ENCODE measurements at regions of chr6 and their contacts with region 1.

Region 1: GRCh38 chr6:133512410-133513016 is 271.4 kb downstream of the EYA4 start:
- DNase-seq: peak; percentile 21
- ATAC-seq: no peak
- H3K4me3 ChIP-seq: no peak overlapping the region
- H3K27ac ChIP-seq: no peak overlapping the region
- H3K4me1 ChIP-seq: no peaks in the 10 kb centered on the region
- H3K27me3 ChIP-seq: no peaks in the 10 kb centered on the region
- CTCF ChIP-seq: peak; percentile 20 to 71 (median 58)

Region 2: DNA sequence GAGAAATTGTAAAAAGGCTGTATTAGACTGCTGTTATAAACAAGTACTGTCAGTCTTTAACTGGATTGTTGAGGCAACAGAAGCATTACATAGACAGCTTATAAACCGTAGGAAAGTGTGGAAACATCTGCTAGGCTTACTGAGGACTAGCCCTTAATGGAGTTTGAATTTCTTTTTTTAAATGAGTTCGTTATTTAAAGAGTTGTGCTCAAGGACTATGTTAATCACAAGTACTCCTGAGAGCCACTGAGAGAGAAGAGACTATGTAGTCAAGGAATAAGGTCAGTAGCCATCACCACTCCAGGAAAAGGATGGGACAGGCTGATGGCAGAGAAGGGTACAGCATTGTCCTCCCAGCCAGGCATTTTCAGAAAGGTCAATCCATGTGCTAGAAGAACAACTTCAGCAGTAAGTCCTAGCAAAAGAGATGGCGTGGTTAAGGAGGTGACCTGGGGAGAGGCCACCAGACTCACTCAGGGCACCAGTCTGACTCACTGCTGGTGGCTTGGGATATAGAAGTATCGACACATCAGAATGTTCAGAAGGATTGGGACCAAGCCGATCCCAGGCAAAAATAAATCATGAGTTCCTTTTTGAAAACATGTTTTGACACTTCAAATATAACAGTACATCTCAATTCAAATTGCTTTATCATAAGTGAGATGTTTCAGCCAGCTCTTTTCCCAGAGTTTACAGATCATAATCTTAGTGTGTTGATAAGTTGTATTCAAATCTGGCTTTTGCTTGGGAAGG is 691.7 kb before region 1 on chr6:
- intact Hi-C with region 1: loop called in 1 of 10 experiments (anchors 10 kb)
- DNase-seq: no peak
- ATAC-seq: peak in 2 of 8 donors; percentile 34 to 39
- H3K4me3 ChIP-seq: no peak overlapping the region
- H3K27ac ChIP-seq: no peak overlapping the region
- H3K4me1 ChIP-seq: peaks cover 0 to 27% (median 19%) of the 10 kb centered on the region in 9 donors
- H3K27me3 ChIP-seq: no peaks in the 10 kb centered on the region
- CTCF ChIP-seq: no peak

Region 3: GRCh38 chr6:132830334-132830751 is 682.2 kb before region 1 on chr6:
- intact Hi-C with region 1: loop called in 3 of 10 experiments (anchors 5 to 10 kb)
- DNase-seq: peak in 1 of 2 donors; percentile 9
- ATAC-seq: peak in 1 of 8 donors; percentile 57
- H3K4me3 ChIP-seq: no peak overlapping the region
- H3K27ac ChIP-seq: no peak overlapping the region
- H3K4me1 ChIP-seq: no peaks in the 10 kb centered on the region
- H3K27me3 ChIP-seq: no peaks in the 10 kb centered on the region
- CTCF ChIP-seq: peak in 7 of 9 donors; percentile 33 to 62 (median 58)

Region 4: DNA sequence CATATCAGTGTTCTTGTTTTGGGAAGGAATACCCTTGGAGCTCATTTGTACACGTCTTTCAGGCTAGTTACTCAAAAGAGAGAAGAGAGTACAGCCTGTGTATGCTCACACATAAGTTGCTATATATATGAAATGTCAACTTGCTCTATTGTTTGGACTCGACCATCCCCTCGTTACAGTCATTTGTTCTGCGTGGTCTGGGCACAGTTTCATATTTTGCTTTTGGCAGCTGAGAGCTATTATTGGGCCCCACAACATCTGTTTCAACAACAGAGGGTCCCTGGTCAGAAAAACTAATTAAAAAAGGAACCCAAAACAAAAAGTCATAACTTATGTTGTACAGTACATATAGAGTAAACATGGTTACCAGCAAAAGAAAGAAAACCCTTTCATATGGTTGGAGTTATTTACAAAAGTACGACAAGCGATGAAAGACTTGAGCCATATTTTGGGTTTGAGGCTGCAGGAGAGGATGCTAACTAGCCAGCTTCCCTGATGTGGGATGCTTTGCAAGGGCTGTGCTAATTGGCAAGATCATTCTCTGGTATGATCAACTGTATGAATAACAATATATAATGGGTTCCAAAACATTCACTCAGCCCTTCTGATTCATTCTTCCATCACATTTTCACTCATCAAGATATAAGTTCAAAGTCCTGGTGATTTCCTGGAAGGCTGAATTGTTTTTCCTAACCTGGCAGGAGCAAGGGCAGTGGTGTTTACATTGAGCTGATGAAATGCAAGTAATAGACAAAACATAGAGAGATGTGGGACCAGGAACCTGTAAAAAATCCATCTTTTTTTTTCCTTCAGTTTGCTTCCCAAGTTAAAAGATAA is 560.3 kb before region 1 on chr6:
- intact Hi-C with region 1: loop called in 2 of 10 experiments (anchors 10 kb)
- DNase-seq: no peak
- ATAC-seq: no peak
- H3K4me3 ChIP-seq: no peak overlapping the region
- H3K27ac ChIP-seq: no peak overlapping the region
- H3K4me1 ChIP-seq: peaks cover 0 to 6% (median 0%) of the 10 kb centered on the region in 9 donors
- H3K27me3 ChIP-seq: no peaks in the 10 kb centered on the region
- CTCF ChIP-seq: no peak

Region 5: DNA sequence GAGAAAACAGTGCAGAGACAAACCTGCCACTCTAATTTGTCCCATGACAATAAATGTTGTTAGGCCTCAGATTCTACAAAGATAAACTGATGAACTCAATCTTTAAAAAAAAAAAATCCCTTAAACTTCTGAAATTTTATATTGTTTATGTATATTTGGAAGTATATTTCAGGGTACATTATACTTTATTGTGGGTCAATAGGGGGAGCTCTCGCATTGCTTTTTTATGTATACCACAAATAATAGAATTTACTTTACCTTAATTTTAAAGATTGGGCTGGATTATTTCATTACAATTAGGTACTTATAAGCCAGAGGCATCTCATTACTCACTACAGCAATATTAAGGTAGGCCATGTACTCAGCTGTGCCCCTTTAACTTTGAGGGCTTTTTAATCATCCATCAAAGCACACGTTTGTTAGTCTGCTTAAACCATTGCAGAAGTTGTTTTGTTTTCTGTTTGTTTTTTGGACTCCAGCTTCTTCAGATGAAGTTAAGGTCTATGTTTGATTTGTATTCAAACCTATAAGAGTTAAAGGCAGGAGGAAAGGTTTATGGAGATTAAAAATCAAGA is 327.6 kb before region 1 on chr6:
- intact Hi-C with region 1: loop called in 9 of 10 experiments (anchors 5 to 10 kb)
- DNase-seq: no peak
- ATAC-seq: no peak
- H3K4me3 ChIP-seq: no peak overlapping the region
- H3K27ac ChIP-seq: no peak overlapping the region
- H3K4me1 ChIP-seq: no peaks in the 10 kb centered on the region
- H3K27me3 ChIP-seq: no peaks in the 10 kb centered on the region
- CTCF ChIP-seq: peak; percentile 7 to 70 (median 57)

Region 6: GRCh38 chr6:133198725-133199124 is 313.8 kb before region 1 on chr6:
- intact Hi-C with region 1: loop called in 1 of 10 experiments (anchors 10 kb)
- DNase-seq: no peak
- ATAC-seq: no peak
- H3K4me3 ChIP-seq: no peak overlapping the region
- H3K27ac ChIP-seq: no peak overlapping the region
- H3K4me1 ChIP-seq: no peaks in the 10 kb centered on the region
- H3K27me3 ChIP-seq: no peaks in the 10 kb centered on the region
- CTCF ChIP-seq: no peak